ENCODE measurements at regions of chr18 and their contacts with region 1.

Region 1: DNA sequence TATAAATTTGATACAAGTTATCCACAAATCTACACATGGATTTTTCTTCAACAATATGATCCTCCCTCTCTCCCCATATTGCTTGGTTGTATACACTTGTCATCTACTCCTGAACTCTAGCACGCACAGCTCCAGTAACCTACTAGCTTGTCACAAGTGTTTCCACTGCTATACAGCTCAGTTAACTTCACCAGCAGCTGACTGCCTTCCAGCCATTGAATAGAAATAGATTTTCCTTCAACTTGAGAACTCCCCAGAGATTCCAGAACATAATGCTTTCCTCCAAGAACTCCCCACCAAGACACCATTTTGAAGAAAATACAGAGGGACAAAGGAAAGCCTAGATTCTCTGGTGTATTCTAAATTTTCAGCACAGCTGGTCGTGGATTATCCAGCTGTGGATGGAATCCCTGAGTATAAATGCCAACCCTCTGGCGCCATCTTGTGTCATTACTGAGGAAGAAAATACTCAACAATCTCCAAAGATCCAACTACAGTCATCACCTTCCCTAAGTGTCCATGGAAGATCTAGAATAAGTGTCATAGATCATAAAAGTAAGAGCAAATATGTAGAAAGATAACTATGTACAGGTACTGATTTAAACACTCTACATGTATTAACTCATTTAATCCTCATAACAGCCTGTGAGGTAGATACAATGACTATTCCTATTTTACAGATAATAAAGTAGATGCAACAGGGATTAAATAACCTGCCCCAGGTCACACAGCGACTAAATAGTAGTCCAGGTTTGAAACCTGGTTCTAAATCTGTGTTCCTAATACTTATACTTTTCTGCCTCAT is 156.7 kb downstream of the ARHGAP28 start:
- DNase-seq: no peak
- ATAC-seq: peak; percentile 59 to 75
- H3K4me3 ChIP-seq: no peak overlapping the region
- H3K27ac ChIP-seq: no peak overlapping the region
- H3K4me1 ChIP-seq: no peaks in the 10 kb centered on the region
- H3K27me3 ChIP-seq: no peaks in the 10 kb centered on the region
- CTCF ChIP-seq: peak; percentile 60

Region 2: DNA sequence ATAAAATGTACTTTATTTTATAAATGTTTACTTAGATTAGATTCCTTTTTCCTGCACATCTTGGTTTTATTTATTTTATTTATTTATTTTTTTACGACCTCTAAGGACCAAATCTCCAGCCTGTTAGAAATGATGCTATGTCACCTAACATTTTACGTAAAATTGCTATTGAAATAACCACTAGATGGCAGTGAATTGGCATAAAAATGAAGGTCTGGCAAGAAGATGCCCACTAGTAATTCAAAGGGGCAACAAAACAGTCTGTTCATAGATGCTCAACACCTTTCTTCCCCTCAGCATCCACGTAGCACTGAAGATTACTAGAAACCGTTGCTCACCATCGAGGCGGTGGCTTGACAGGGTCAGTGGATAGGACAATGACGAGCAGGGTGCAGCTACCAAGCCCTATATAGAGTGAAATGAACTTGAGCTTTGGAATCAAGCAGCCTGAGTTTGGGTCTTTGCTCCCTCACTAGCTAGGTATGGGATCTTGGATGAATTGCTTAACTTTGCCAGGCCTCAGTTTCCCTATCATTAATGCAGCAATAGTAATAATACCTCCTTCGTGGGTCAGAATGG is 342.8 kb before region 1 on chr18:
- intact Hi-C with region 1: loop called (anchors 5 kb)
- DNase-seq: no peak
- ATAC-seq: peak in 1 of 2 donors; percentile 24
- H3K4me3 ChIP-seq: no peak overlapping the region
- H3K27ac ChIP-seq: no peak overlapping the region
- H3K4me1 ChIP-seq: no peaks in the 10 kb centered on the region
- H3K27me3 ChIP-seq: no peaks in the 10 kb centered on the region
- CTCF ChIP-seq: peak; percentile 49

Region 3: GRCh38 chr18:6821356-6821755 is 64.8 kb before region 1 on chr18:
- intact Hi-C with region 1: no loop called
- DNase-seq: no peak
- ATAC-seq: no peak
- H3K4me3 ChIP-seq: no peak overlapping the region
- H3K27ac ChIP-seq: no peak overlapping the region
- H3K4me1 ChIP-seq: no peaks in the 10 kb centered on the region
- H3K27me3 ChIP-seq: no peaks in the 10 kb centered on the region
- CTCF ChIP-seq: no peak

Region 4: DNA sequence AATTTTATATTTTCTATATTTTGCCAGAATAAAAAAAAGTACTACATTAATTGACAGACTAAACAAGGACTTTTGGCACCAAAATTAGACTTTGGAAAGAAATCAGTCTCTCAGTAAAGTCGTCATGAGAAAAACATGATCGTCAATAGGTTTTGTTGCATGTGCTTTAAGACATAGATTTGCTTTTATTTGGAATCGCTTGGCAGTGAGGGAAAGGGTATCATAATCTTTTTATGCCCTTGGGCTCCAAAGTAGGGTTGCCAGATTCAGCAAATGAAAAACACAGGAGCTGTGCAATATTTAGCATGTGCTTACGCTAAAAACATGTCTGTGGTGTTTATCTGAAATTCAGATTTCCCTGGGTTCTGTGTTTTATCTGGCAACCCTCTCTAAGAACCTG is 53.8 kb after region 1 on chr18:
- intact Hi-C with region 1: no loop called
- DNase-seq: no peak
- ATAC-seq: no peak
- H3K4me3 ChIP-seq: no peak overlapping the region
- H3K27ac ChIP-seq: no peak overlapping the region
- H3K4me1 ChIP-seq: no peaks in the 10 kb centered on the region
- H3K27me3 ChIP-seq: no peaks in the 10 kb centered on the region
- CTCF ChIP-seq: no peak

Measured in lower lobe of right lung (tissue), 2 donors.